Heart left ventricle (tissue), 16 donors: ENCODE measurements at regions of chr1 and their contacts with region 1.

Region 1: DNA sequence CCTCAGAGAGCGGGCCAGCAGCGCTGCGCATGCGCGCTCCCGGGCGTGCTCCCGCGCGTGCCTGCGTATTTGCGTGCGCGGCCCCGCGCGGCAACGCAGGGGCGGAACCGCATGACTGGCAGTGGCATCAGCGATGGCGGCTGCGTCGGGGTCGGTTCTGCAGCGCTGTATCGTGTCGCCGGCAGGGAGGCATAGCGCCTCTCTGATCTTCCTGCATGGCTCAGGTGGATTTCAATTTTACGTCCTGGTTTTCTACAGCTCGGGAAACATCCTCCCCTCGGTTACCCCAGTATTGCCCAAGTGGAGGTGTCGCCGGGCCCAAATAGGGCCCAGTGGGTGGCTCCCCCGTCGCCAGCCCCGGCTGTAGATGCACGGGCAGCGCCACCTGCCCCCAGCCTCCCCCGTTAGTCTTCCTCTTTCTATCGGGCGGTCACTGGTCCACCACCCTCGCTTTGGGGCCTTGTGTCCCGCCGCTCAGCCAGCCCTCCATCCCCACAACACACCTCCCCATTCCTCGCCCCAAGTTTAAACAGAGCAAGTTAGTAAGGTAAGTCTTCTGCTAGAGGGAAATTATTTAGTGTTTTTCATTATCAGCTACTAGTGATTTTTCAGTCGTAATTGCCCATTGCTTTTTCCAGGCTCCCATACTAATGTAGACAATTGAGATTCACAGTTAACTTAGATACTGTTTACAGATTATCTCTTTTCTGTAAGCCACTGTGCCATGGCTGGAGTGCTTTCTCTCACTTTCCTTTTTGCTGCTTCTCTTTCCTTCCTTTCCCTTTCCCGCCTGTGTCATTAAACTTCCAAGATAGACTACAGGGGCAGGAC is at the start of gene LYPLAL1:
- DNase-seq: peak; percentile 90 to 96 (median 92)
- ATAC-seq: peak; percentile 93 to 96 (median 94)
- H3K4me3 ChIP-seq: peak within 1 kb of the TSS; percentile 66 to 92 (median 78)
- H3K27ac ChIP-seq: peak within 1 kb of the TSS; percentile 83 to 97 (median 94)
- H3K4me1 ChIP-seq: peaks cover 0 to 52% (median 31%) of the 10 kb centered on the region in 12 donors
- H3K27me3 ChIP-seq: no peaks in the 10 kb centered on the region
- CTCF ChIP-seq: peak in 3 of 12 donors; percentile 10 to 34 (median 31)
- POLR2A ChIP-seq: peak in 1 of 2 donors; percentile 89
- total RNA-seq, gene LYPLAL1: 31.8 to 126 (median 90.5) TPM

Region 2: GRCh38 chr1:218467101-218468072 is 706.6 kb before region 1 on chr1:
- intact Hi-C with region 1: loop called in 1 of 10 experiments (anchors 5 kb)
- DNase-seq: no peak
- ATAC-seq: no peak
- H3K4me3 ChIP-seq: no peak overlapping the region
- H3K27ac ChIP-seq: peak overlapping the region in 9 of 12 donors; percentile 3 to 72 (median 52)
- H3K4me1 ChIP-seq: peaks cover under 1 to 51% (median 34%) of the 10 kb centered on the region in 12 donors
- H3K27me3 ChIP-seq: no peaks in the 10 kb centered on the region
- CTCF ChIP-seq: no peak
- POLR2A ChIP-seq: no peak